ENCODE measurements at regions of chr5 and their contacts with region 1.

Region 1: DNA sequence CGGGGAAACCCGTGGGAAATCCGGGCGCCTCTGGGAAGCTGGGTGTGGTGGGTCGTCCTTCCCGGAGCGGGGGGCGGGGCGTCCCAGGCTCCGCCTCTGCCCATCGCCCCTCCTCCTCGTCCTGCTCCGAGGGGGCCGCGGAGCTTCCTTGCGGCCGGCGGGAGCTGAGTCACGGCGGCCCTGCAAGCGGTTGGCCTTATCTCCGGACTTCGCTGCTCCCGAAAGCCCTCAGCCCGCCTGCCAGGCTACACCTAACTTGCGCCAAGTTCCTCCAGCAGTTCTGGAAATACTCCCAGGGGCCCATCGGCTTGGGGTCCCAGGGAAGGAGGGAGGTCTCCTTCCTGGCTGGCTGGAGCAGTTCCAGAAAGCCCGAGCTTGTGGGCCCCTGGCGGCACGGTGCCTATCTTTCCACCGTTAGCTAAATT is 54.1 kb upstream of the CDKN2AIPNL start:
- DNase-seq: peak; percentile 95
- ATAC-seq: peak; percentile 88

Region 2: DNA sequence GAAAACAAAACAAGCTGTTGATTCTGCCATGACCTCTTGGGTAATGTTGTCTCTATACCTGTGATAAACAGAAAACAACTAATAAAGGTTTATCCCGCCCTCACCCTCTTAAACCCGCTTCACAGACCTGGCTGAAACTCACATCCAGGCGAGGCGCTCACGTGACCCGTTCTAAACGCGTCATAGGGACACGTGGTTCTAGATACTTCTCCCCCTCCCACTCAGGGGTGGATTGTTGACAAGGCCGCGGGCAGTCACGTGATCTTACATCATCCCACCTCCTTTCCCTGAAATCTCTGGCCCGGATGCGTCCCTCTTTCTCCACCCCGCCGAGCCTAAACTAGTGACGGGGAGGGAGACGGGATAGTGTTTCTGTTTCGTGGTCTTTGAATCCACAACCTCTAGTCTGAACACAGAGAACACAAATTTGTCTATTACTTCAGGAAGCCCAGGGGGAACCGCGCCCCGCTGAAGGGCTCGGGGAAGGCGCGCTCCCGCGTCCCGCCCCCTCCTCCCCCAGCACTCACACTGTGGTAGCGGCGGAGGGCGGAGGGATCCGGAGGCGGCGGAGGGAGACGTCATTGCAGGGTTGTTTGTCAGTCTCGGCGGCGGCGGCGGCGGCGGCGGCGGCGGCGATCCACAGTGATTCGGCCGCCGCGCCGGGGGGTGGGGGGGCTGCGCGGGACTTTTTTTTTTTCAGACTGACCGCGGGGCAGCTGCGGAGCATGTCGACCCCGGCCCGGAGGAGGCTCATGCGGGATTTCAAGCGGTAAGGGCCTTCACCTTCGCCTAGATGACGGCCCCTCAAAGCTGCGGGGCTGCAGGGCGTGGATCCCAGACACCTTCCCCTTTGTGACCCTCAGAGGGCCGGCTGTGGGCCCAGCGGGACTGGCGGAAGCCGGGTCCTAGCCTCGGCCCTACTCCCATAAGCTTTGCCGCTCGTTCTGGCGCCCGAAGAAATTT is 94.7 kb before region 1 on chr5 and contains the start of gene UBE2B:
- intact Hi-C with region 1: loop called (anchors 2 kb)
- DNase-seq: peak; percentile 98
- ATAC-seq: peak; percentile 94
- total RNA-seq, gene UBE2B: 258 TPM

Region 3: GRCh38 chr5:134411546-134412266 is 54.1 kb before region 1 on chr5 and contains the start of gene CDKN2AIPNL:
- intact Hi-C with region 1: loop called (anchors 2 kb)
- DNase-seq: peak; percentile 96
- ATAC-seq: peak; percentile 100
- total RNA-seq, gene CDKN2AIPNL: 45.7 TPM

Region 4: DNA sequence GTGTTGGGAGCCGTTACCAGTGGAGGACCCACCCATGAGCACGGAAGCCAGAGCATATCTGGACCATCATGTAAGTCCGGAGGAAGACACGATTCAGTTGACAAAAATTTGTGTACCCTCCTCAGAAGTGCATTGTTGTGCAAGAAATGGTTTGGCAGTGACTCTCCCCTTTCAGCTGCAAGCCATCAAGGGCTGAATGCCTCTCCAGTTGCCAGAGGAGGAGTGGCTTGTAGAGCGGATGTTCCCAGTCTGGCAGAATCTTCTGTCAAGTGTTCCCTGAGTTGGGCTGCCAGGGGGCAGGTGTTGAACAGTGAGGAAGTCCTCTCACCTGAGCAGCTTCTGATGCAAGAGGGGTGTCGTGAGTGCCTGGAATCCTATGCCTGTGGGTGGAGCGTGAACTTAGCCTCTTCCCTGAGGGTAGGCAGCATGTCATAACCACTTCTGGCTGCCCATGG is 26.6 kb before region 1 on chr5:
- intact Hi-C with region 1: loop called (anchors 1 kb)
- DNase-seq: peak; percentile 77
- ATAC-seq: peak; percentile 84

Region 5: GRCh38 chr5:134506054-134507039 is 40.5 kb after region 1 on chr5:
- intact Hi-C with region 1: loop called (anchors 1 kb)
- DNase-seq: peak; percentile 84
- ATAC-seq: peak; percentile 93

Region 6: GRCh38 chr5:134577796-134578363 is 112.1 kb after region 1 on chr5:
- intact Hi-C with region 1: loop called (anchors 2 kb)
- DNase-seq: peak; percentile 90
- ATAC-seq: peak; percentile 25

Region 7: DNA sequence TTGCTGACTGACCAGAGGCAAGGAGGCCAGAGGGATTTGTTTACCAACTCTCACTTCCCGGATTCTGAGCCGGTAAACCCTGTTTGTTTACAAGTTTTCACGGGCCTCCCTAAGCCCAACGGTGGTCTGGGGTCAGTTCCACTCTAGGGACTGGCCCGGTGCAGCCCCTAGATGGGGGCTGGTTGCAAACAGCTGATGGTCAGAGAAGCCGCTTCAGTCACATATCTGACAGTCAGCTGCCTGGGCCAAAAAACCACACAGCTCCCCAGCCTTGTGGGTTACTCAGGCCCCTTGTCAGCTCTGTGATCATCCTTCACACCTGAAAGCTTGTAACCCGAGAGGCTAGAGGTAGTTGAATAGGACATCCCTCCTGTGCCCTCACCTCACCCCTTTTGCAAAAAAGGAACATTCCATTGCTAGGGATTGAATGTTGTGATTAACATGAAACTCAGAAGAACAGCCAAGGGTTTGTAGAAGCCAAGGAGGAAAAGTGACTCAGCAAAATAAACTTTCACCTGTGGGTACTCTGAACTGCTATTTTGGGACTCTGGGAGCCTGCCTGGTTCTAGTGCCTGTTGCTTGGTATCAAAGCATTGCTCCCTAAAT is 126.4 kb after region 1 on chr5:
- intact Hi-C with region 1: no loop called
- DNase-seq: no peak
- ATAC-seq: peak; percentile 48

Measured in Right ventricle myocardium inferior (tissue), 1 donor.